CD8-positive, alpha-beta T cell (primary cell): ENCODE measurements at regions of chr2 and their contacts with region 1.

Region 1: GRCh38 chr2:28594289-28595108 is 98.6 kb downstream of the PLB1 start:
- DNase-seq: peak; percentile 72 to 93 (median 86)
- ATAC-seq: peak; percentile 79
- H3K4me3 ChIP-seq: peak overlapping the region in 1 of 2 experiments; percentile 0
- H3K4me3 Mint-ChIP-seq: peak overlapping the region; percentile 46
- H3K27ac ChIP-seq: peak overlapping the region in 1 of 2 experiments; percentile 44
- H3K27ac Mint-ChIP-seq: peak overlapping the region; percentile 81
- H3K4me1 ChIP-seq: peaks cover 14% of the 10 kb centered on the region
- H3K4me1 Mint-ChIP-seq: peaks cover 17% of the 10 kb centered on the region
- H3K27me3 ChIP-seq: no peaks in the 10 kb centered on the region
- H3K27me3 Mint-ChIP-seq: peaks cover 7% of the 10 kb centered on the region
- CTCF ChIP-seq: peak; percentile 84

Region 2: GRCh38 chr2:28437151-28437811 is 157.2 kb before region 1 on chr2:
- CTCF ChIA-PET with region 1: no interaction called
- POLR2A ChIA-PET with region 1: no interaction called
- intact Hi-C with region 1: no loop called
- DNase-seq: no peak
- ATAC-seq: no peak
- H3K4me3 ChIP-seq: no peak overlapping the region
- H3K4me3 Mint-ChIP-seq: no peak overlapping the region
- H3K27ac ChIP-seq: no peak overlapping the region
- H3K27ac Mint-ChIP-seq: no peak overlapping the region
- H3K4me1 ChIP-seq: no peaks in the 10 kb centered on the region
- H3K4me1 Mint-ChIP-seq: peaks cover 6% of the 10 kb centered on the region
- H3K27me3 ChIP-seq: no peaks in the 10 kb centered on the region
- H3K27me3 Mint-ChIP-seq: no peaks in the 10 kb centered on the region
- CTCF ChIP-seq: no peak

Region 3: GRCh38 chr2:28583899-28584553 is 10.5 kb before region 1 on chr2:
- CTCF ChIA-PET with region 1: interaction called, 60 read pairs
- POLR2A ChIA-PET with region 1: no interaction called
- intact Hi-C with region 1: no loop called
- DNase-seq: peak in 6 of 9 experiments; percentile 22 to 50 (median 34)
- ATAC-seq: peak; percentile 55
- H3K4me3 ChIP-seq: no peak overlapping the region
- H3K4me3 Mint-ChIP-seq: no peak overlapping the region
- H3K27ac ChIP-seq: no peak overlapping the region
- H3K27ac Mint-ChIP-seq: no peak overlapping the region
- H3K4me1 ChIP-seq: peaks cover 19% of the 10 kb centered on the region
- H3K4me1 Mint-ChIP-seq: peaks cover 26% of the 10 kb centered on the region
- H3K27me3 ChIP-seq: no peaks in the 10 kb centered on the region
- H3K27me3 Mint-ChIP-seq: peaks cover 3% of the 10 kb centered on the region
- CTCF ChIP-seq: no peak

Region 4: GRCh38 chr2:28621172-28622100 is 26.9 kb after region 1 on chr2:
- CTCF ChIA-PET with region 1: interaction called, 43 read pairs
- POLR2A ChIA-PET with region 1: interaction called, 6 read pairs
- intact Hi-C with region 1: loop called (anchors 1 kb)
- DNase-seq: peak; percentile 60 to 96 (median 78)
- ATAC-seq: peak; percentile 85
- H3K4me3 ChIP-seq: peak overlapping the region; percentile 19 to 33
- H3K4me3 Mint-ChIP-seq: peak overlapping the region; percentile 68
- H3K27ac ChIP-seq: peak overlapping the region; percentile 86 to 98
- H3K27ac Mint-ChIP-seq: peak overlapping the region; percentile 99
- H3K4me1 ChIP-seq: peaks cover 87% of the 10 kb centered on the region
- H3K4me1 Mint-ChIP-seq: peaks cover 92% of the 10 kb centered on the region
- H3K27me3 ChIP-seq: no peaks in the 10 kb centered on the region
- H3K27me3 Mint-ChIP-seq: no peaks in the 10 kb centered on the region
- CTCF ChIP-seq: no peak

Region 5: DNA sequence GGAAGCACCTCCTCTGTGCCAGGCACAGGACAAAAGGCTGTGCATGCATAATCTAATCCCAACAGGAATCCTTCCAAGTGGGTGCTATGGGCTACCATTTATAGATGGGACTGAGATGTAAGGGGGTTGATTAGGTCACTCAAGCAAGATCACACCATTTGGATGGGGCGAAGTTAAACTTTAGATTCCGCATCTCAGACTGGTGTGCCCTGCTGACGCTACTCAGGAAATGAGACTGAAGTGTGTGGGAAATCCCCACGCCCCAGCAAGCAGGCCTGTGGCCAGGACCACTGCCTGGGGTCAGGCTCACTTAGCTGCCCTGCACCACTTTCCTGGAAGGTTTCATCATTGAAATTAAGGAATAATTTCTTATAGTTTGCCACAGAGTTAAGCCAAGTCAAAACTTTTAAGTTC is 86.7 kb after region 1 on chr2:
- CTCF ChIA-PET with region 1: interaction called, 3 read pairs
- POLR2A ChIA-PET with region 1: no interaction called
- intact Hi-C with region 1: loop called in 1 of 2 experiments (anchors 5 kb)
- DNase-seq: peak; percentile 14 to 89 (median 57)
- ATAC-seq: peak; percentile 86
- H3K4me3 ChIP-seq: no peak overlapping the region
- H3K4me3 Mint-ChIP-seq: peak overlapping the region; percentile 9
- H3K27ac ChIP-seq: peak overlapping the region in 1 of 2 experiments; percentile 33
- H3K27ac Mint-ChIP-seq: peak overlapping the region; percentile 9
- H3K4me1 ChIP-seq: peaks cover 17% of the 10 kb centered on the region
- H3K4me1 Mint-ChIP-seq: peaks cover 21% of the 10 kb centered on the region
- H3K27me3 ChIP-seq: no peaks in the 10 kb centered on the region
- H3K27me3 Mint-ChIP-seq: no peaks in the 10 kb centered on the region
- CTCF ChIP-seq: no peak

Region 6: DNA sequence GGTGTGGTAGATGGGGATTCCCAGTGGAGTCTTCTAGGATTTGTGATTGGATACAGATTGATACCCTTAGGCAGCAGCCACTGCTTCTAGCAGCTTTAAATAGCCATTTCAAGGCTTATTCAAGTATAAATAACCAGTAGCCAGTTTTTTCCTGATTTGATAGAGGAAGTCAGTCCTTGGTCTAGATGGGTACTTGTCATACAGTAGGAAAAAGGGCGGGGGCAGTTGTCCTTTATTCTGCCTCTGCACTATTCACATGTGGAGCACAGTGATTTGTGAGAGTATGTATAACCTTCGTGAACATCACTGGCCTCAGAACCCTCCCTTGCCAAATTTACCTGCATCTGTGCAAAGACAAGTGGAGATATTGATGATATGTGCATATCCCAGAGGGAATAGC is 164.0 kb after region 1 on chr2:
- CTCF ChIA-PET with region 1: interaction called, 168 read pairs
- POLR2A ChIA-PET with region 1: interaction called, 9 read pairs
- intact Hi-C with region 1: loop called (anchors 1 kb)
- DNase-seq: no peak
- ATAC-seq: no peak
- H3K4me3 ChIP-seq: no peak overlapping the region
- H3K4me3 Mint-ChIP-seq: no peak overlapping the region
- H3K27ac ChIP-seq: no peak overlapping the region
- H3K27ac Mint-ChIP-seq: no peak overlapping the region
- H3K4me1 ChIP-seq: peaks cover 62% of the 10 kb centered on the region
- H3K4me1 Mint-ChIP-seq: peaks cover 82% of the 10 kb centered on the region
- H3K27me3 ChIP-seq: no peaks in the 10 kb centered on the region
- H3K27me3 Mint-ChIP-seq: no peaks in the 10 kb centered on the region
- CTCF ChIP-seq: no peak

Region 7: DNA sequence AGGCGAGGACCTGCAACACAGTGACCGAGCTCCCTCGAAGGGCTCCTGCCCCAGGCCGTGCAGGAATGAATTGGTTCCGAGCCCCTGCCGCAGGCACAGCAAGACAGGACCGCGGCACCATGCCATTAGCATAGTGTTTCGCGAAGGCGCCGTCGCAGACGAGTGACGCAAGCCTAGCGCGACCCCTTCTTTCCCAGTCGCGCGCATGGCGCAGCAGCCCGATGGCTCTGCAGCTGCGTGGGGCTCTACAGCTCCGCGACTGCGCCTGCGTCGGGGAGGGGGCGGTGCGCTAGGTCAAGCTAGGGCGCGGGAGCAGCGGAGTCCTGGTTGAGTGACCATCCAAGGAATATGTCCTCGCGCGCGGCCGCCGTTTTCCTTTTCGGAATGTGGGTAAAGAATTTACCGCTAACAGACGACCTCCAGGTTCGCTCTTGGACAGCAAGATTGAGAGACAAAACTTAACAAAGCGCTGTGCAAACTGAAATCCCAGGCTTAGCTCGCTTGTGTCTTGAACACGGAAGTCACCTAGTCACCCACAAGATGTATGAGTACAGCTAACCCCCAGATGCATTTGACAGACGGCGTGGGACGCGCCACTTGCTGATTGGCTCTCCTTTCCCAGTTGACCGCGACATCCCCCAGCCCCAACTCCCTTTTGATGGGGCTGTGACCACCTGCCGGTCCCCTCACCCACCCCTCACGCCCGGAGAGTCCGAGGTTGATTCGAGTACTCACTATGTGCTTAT is 275.8 kb after region 1 on chr2 and contains the start of gene TRMT61B:
- CTCF ChIA-PET with region 1: no interaction called
- POLR2A ChIA-PET with region 1: no interaction called
- intact Hi-C with region 1: loop called in 1 of 2 experiments (anchors 1 kb)
- DNase-seq: peak; percentile 89 to 99 (median 97)
- ATAC-seq: peak; percentile 96
- H3K4me3 ChIP-seq: peak within 1 kb of the TSS; percentile 89 to 98
- H3K4me3 Mint-ChIP-seq: peak within 1 kb of the TSS; percentile 94
- H3K27ac ChIP-seq: peak within 1 kb of the TSS; percentile 94 to 95
- H3K27ac Mint-ChIP-seq: peak within 1 kb of the TSS; percentile 99
- H3K4me1 ChIP-seq: peaks cover 28% of the 10 kb centered on the region
- H3K4me1 Mint-ChIP-seq: peaks cover 33% of the 10 kb centered on the region
- H3K27me3 ChIP-seq: no peaks in the 10 kb centered on the region
- H3K27me3 Mint-ChIP-seq: no peaks in the 10 kb centered on the region
- CTCF ChIP-seq: no peak
- total RNA-seq, gene TRMT61B: 17.9 to 22.9 TPM

Region 8: GRCh38 chr2:30146438-30147147 is 1552.1 kb after region 1 on chr2 and contains the start of gene YPEL5:
- CTCF ChIA-PET with region 1: no interaction called
- POLR2A ChIA-PET with region 1: no interaction called
- intact Hi-C with region 1: no loop called
- DNase-seq: peak; percentile 99 to 100 (median 100)
- ATAC-seq: peak; percentile 82
- H3K4me3 ChIP-seq: peak within 1 kb of the TSS; percentile 75 to 76
- H3K4me3 Mint-ChIP-seq: peak within 1 kb of the TSS; percentile 89
- H3K27ac ChIP-seq: peak within 1 kb of the TSS; percentile 97 to 100
- H3K27ac Mint-ChIP-seq: peak within 1 kb of the TSS; percentile 100
- H3K4me1 ChIP-seq: peaks cover 50% of the 10 kb centered on the region
- H3K4me1 Mint-ChIP-seq: peaks cover 60% of the 10 kb centered on the region
- H3K27me3 ChIP-seq: no peaks in the 10 kb centered on the region
- H3K27me3 Mint-ChIP-seq: no peaks in the 10 kb centered on the region
- CTCF ChIP-seq: no peak
- total RNA-seq, gene YPEL5: 1,051 to 1,071 TPM